ENCODE measurements at regions of chr20 and their contacts with region 1.

Region 1: GRCh38 chr20:35454881-35455609 is at the start of gene CEP250:
- DNase-seq: peak; percentile 94
- H3K4me3 Mint-ChIP-seq: peak within 1 kb of the TSS; percentile 89
- H3K27ac Mint-ChIP-seq: peak within 1 kb of the TSS; percentile 99
- H3K4me1 Mint-ChIP-seq: peaks cover 27% of the 10 kb centered on the region
- H3K27me3 Mint-ChIP-seq: no peaks in the 10 kb centered on the region
- total RNA-seq, gene CEP250: 43.4 to 46.9 TPM

Region 2: GRCh38 chr20:35410613-35411012 is 44.4 kb before region 1 on chr20:
- CTCF ChIA-PET with region 1: no interaction called
- intact Hi-C with region 1: loop called (anchors 1 kb)
- DNase-seq: no peak
- H3K4me3 Mint-ChIP-seq: peak overlapping the region; percentile 94
- H3K27ac Mint-ChIP-seq: peak overlapping the region; percentile 98
- H3K4me1 Mint-ChIP-seq: peaks cover 22% of the 10 kb centered on the region
- H3K27me3 Mint-ChIP-seq: no peaks in the 10 kb centered on the region

Region 3: DNA sequence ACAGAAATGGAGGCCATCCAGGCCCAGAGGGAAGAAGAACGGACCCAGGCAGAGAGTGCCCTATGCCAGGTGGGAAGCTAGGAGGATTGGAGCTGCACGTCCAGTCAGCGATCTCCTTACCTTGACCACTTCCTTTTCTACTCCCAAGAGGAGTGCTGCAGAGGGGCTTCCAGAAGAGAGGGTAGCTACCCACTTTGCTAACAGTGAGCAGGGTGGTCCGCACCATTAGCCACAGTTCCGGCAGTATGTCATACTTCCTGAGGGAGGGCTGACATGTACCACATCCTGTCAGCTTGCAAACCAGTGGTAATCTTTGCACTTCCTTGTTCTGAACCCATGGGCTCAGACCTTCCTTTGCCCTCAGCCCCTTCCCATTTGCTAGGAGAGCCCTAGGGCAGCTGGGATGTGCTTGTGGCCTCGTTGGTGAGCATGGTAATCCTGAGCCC is 35.7 kb after region 1 on chr20:
- CTCF ChIA-PET with region 1: no interaction called
- intact Hi-C with region 1: loop called (anchors 1 kb)
- DNase-seq: peak; percentile 80
- H3K4me3 Mint-ChIP-seq: peak overlapping the region; percentile 98
- H3K27ac Mint-ChIP-seq: peak overlapping the region; percentile 97
- H3K4me1 Mint-ChIP-seq: peaks cover 42% of the 10 kb centered on the region
- H3K27me3 Mint-ChIP-seq: no peaks in the 10 kb centered on the region

Measured in activated naive CD4-positive, alpha-beta T cell treated with anti-CD3 and anti-CD28 coated beads for 36 hours (primary cell).